ENCODE measurements at regions of chr10 and their contacts with region 1.

Region 1: GRCh38 chr10:71850637-71851464 is at the start of gene PSAP:
- H3K4me3 ChIP-seq: peak within 1 kb of the TSS; percentile 93
- H3K27ac ChIP-seq: peak within 1 kb of the TSS; percentile 65
- H3K4me1 ChIP-seq: 0 out of 2 replicates have a peak, but pooled peaks cover 10% of the 10 kb centered on the region
- CTCF ChIP-seq: peak; percentile 75

Region 2: DNA sequence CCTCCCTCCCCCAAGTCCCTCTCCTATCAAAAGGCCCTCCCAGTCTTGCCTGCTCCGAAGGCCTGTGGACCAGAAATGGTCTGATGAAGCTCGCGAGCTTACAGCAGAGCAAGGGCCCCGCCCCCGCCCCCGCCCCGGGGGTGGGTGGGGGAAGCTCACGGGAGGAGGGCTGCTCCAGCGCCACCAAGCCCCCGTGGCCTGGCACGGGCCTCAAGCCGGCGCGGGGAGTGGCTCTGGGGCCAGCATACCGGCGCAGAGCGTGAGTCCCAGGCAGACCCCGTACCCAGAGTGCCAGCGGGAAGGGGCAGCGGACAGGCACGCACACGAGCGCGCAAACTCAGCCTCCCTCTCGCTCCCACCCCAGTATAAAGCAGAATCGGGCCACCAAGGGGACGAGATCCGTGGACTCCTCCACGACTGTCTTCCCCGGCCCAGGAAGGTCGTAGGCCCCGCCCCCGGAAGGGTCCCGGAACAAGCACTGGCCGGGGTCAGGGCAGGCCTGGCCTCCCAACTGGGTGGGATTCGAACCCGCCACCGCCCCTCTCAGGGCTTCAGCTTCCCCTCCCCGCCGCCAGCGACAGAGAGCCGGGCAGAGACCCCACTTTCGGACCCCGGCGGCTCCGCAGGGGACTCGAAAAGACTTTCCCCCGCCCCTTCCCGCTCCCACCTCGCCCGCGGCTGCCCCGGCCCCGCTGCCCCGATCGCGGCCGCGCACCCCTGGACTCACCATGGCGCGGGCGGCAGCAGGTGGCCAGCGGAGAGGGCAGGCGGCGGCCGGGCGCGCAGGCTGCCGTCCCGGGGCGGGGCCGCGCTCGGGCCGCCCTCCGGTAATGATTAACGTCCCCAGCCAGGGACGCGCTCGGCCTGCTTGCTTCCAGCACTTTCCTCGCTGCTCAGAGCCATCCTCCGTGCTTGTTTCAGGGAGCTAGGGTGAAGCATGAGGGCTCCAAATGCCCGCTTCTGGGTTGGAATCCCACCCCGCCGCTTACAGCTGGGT is 962.7 kb before region 1 on chr10 and contains the start of gene PCBD1:
- CTCF ChIA-PET with region 1: no interaction called
- POLR2A ChIA-PET with region 1: no interaction called
- H3K4me3 ChIP-seq: peak within 1 kb of the TSS; percentile 50
- H3K27ac ChIP-seq: peak within 1 kb of the TSS; percentile 55
- H3K4me1 ChIP-seq: peaks cover 4% of the 10 kb centered on the region
- CTCF ChIP-seq: no peak

Region 3: DNA sequence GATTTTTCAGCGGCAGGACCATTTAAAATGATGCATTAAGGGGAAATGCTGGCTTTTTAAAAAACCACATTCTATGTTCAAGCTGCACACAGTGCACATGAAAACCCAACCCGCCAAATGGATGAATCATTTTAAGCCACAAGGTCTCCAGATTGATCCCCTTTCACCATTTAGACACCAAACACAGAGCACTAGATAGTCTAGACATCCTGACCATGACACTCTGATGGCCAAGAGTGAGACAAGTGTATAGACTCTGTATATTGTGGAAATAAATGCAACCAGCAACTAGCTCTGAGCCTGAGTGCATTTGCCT is 28.4 kb before region 1 on chr10:
- CTCF ChIA-PET with region 1: interaction called, 4 read pairs
- POLR2A ChIA-PET with region 1: interaction called, 11 read pairs
- H3K4me3 ChIP-seq: no peak overlapping the region
- H3K27ac ChIP-seq: no peak overlapping the region
- H3K4me1 ChIP-seq: no peaks in the 10 kb centered on the region
- CTCF ChIP-seq: no peak

Region 4: GRCh38 chr10:71835671-71836595 is 14.9 kb before region 1 on chr10:
- CTCF ChIA-PET with region 1: interaction called, 7 read pairs
- POLR2A ChIA-PET with region 1: interaction called, 44 read pairs
- H3K4me3 ChIP-seq: no peak overlapping the region
- H3K27ac ChIP-seq: peak overlapping the region; percentile 71
- H3K4me1 ChIP-seq: peaks cover 44% of the 10 kb centered on the region
- CTCF ChIP-seq: no peak

Measured in HEK293 (cell line).